Mammary epithelial cell (primary cell): ENCODE measurements at regions of chr19 and their contacts with region 1.

Region 1: DNA sequence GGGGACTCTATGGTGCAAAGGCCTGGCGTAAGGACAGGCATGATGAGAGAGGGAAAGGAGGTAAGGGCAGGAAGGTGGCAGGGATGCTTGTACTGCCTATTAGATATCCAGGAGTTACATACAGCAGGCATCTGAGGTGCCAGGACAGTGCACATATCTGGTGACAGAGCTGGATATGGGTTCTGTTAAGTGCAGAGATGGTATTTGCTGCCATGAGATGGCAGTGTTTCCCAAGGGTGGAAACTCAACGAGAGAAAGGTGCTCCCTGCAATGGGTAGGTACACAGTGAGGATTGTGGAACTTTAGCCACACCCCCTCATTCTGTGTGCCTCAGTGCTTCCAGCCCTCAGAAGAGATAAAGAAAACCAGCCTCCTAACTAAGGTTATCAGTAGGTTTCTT is 6.9 kb downstream of the TNPO2 start:
- DNase-seq: peak; percentile 59
- H3K4me3 ChIP-seq: no peak overlapping the region
- H3K27ac ChIP-seq: no peak overlapping the region
- H3K4me1 ChIP-seq: peaks cover 19% of the 10 kb centered on the region
- H3K27me3 ChIP-seq: no peaks in the 10 kb centered on the region
- CTCF ChIP-seq: peak; percentile 40 to 59

Region 2: DNA sequence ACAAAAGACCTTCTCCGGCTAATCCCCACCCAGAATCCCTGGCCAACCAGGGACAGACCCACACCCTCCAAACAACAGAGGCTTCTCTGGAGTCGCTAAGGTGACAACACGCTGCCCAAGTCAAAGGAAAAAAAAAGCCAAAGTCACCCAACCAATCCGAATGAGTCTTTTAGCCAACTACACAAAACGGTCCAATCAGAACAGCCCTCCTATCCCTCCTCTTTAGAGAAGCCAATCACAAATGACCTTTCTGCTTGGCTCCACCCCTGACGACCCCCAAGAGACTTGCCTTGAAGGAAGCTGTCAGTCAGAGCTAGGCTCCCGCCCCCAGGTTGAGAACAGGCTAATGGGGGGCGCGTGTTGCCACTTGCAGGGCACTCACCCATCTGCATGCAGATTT is 13.8 kb before region 1 on chr19:
- CTCF ChIA-PET with region 1: no interaction called
- dilution Hi-C with region 1: no loop called
- in situ Hi-C with region 1: no loop called
- intact Hi-C with region 1: no loop called
- DNase-seq: peak; percentile 9
- H3K4me3 ChIP-seq: no peak overlapping the region
- H3K27ac ChIP-seq: no peak overlapping the region
- H3K4me1 ChIP-seq: no peaks in the 10 kb centered on the region
- H3K27me3 ChIP-seq: no peaks in the 10 kb centered on the region
- CTCF ChIP-seq: no peak

Region 3: DNA sequence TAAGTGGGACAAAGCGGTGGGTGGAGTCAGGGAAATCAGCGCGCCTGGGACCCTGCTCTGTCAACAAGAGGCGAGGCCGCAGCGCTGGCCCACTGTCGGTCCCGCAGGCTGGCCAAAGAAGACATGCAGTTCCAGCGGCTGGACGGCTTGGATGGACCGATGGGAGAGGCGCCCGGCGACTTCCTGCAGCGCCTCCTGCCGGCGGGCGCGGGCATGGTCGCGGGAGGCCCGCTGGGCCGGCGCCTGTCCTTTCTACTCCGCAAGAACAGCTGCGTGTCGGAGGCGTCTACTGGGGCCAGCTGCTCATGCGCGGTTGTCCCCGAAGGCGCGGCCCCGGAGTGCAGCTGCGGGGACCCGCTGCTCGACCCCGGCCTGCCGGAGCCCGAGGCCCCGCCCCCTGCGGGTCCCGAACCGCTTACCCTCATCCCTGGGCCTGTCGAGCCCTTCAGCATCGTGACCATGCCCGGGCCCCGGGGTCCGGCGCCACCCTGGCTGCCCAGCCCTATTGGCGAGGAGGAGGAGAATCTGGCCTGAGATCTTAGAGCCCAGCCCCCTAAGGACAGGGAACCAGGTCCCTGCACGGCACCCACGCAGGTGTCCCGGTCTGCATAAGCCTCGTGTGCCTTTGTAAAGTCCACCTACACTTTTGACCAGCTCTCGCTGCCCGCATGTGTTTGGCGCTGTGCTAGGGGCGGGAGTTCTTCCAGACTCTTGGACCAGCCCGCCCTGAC is 40.8 kb after region 1 on chr19:
- CTCF ChIA-PET with region 1: interaction called, 5 read pairs
- dilution Hi-C with region 1: no loop called
- in situ Hi-C with region 1: no loop called
- intact Hi-C with region 1: loop called (anchors 1 kb)
- DNase-seq: peak; percentile 55
- H3K4me3 ChIP-seq: peak overlapping the region in 2 of 3 experiments; percentile 32 to 38
- H3K27ac ChIP-seq: no peak overlapping the region
- H3K4me1 ChIP-seq: peaks cover 7% of the 10 kb centered on the region
- H3K27me3 ChIP-seq: no peaks in the 10 kb centered on the region
- CTCF ChIP-seq: peak; percentile 82 to 92